Ascending aorta (tissue), 2 donors: ENCODE measurements at regions of chr16 and their contacts with region 1.

Region 1: DNA sequence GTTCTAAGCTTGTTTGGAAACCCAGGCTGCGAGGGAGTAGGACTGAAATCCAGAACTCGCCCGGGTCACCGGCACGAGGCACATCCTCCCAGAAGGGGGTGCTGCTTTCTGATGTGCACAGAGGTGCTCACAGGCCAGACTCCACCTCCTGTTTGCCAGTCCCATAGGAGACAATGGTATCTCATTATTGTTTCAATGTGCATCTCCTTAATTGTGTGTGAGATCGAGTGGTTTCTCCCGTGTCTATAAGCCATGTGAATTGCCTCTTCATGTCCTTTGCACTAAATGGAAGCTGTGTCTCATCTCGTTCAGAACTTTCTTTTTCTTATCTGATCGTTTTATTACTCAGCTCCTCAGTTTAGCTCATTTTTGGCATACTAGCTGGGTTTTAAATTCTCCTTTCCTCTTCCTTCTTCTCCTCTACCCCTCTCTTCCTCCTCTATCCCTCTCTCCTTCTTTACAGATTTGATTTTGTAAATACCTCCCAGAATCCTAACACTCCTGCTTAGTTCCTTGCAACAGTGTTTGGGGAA is 32.1 kb upstream of the PRKCB start:
- DNase-seq: peak in 1 of 2 donors; percentile 64
- H3K4me3 ChIP-seq: peak overlapping the region; percentile 20 to 25
- H3K27ac ChIP-seq: no peak overlapping the region
- H3K4me1 ChIP-seq: no peaks in the 10 kb centered on the region
- H3K27me3 ChIP-seq: no peaks in the 10 kb centered on the region
- CTCF ChIP-seq: peak; percentile 11 to 45 (median 12)

Region 2: GRCh38 chr16:24010440-24011089 is 206.9 kb after region 1 on chr16:
- intact Hi-C with region 1: loop called (anchors 1 kb)
- DNase-seq: peak in 1 of 2 donors; percentile 83
- H3K4me3 ChIP-seq: no peak overlapping the region
- H3K27ac ChIP-seq: no peak overlapping the region
- H3K4me1 ChIP-seq: no peaks in the 10 kb centered on the region
- H3K27me3 ChIP-seq: no peaks in the 10 kb centered on the region
- CTCF ChIP-seq: peak; percentile 34 to 56 (median 45)

Region 3: GRCh38 chr16:24036614-24037013 is 233.0 kb after region 1 on chr16:
- intact Hi-C with region 1: loop called (anchors 2 kb)
- DNase-seq: no peak
- H3K4me3 ChIP-seq: no peak overlapping the region
- H3K27ac ChIP-seq: no peak overlapping the region
- H3K4me1 ChIP-seq: no peaks in the 10 kb centered on the region
- H3K27me3 ChIP-seq: no peaks in the 10 kb centered on the region
- CTCF ChIP-seq: peak; percentile 35 to 65 (median 43)

Region 4: GRCh38 chr16:24504472-24505345 is 701.1 kb after region 1 on chr16:
- intact Hi-C with region 1: loop called (anchors 10 kb)
- DNase-seq: peak in 1 of 2 donors; percentile 72
- H3K4me3 ChIP-seq: no peak overlapping the region
- H3K27ac ChIP-seq: no peak overlapping the region
- H3K4me1 ChIP-seq: peaks cover 0 to 2% of the 10 kb centered on the region in 2 donors
- H3K27me3 ChIP-seq: no peaks in the 10 kb centered on the region
- CTCF ChIP-seq: peak; percentile 55 to 74 (median 65)